ENCODE measurements at regions of chr2 and their contacts with region 1.

Region 1: GRCh38 chr2:233261819-233262555 is 10.5 kb downstream of the ATG16L1 start:
- DNase-seq: no peak
- H3K4me3 ChIP-seq: no peak overlapping the region
- CTCF ChIP-seq: no peak

Region 2: DNA sequence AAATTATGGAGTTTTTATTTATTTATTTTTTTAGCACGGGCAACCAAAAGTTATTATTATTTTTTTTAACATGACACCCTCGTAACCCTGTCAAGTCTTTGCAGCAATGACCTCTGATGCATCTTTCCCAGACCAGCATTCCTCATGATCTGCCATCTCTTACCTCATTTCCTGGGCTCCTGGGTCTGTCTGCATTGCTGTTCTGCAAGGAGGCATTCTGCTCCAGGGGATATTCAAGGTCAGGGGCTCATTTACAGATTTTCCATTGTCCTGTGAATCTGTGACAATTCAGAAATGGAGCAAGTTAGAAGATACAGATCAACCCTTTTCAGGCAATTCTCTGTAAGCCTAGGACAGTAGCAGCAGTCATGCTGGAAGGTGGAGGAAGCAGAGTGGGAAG is 291.9 kb before region 1 on chr2:
- CTCF ChIA-PET with region 1: no interaction called
- POLR2A ChIA-PET with region 1: no interaction called
- DNase-seq: no peak
- H3K4me3 ChIP-seq: no peak overlapping the region
- CTCF ChIP-seq: no peak

Region 3: DNA sequence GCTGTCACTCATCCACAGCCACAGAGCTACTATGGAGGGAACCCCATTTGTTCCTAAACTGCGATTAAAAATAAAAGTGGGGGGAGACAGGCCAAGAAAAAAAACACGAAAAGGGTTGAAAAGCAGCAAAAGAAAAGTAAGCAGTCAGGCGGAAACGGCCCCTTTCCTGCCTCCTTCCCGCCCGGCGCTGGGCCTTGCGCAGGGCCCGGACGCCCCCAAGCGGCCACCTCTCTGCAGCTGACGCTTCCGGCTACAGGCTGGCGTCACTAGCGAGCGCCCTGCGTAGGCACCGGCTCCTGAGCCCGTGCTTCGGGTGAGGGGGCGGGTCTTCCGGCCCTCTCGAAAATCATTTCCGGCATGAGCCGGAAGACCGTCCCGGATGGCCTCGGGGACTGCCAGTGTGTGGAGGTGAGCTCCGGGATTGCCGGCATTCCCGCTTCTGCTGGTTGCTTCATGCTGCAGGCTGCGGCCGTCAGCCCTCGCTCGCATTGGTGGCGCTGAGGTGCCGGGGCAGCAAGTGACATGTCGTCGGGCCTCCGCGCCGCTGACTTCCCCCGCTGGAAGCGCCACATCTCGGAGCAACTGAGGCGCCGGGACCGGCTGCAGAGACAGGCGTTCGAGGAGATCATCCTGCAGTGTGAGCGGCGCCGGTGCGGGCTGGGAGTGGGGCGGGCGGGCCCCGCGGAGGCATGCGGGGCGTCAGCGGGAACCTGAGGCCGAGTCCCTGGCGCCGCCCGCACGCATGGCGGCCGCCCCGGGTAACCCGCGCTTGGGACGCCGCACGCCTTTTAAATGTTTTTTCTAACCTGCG is 10.5 kb before region 1 on chr2 and contains the start of gene ATG16L1:
- CTCF ChIA-PET with region 1: interaction called, 17 read pairs
- POLR2A ChIA-PET with region 1: interaction called, 3 read pairs
- DNase-seq: peak; percentile 70
- H3K4me3 ChIP-seq: peak within 1 kb of the TSS; percentile 100
- CTCF ChIP-seq: peak; percentile 97

Region 4: DNA sequence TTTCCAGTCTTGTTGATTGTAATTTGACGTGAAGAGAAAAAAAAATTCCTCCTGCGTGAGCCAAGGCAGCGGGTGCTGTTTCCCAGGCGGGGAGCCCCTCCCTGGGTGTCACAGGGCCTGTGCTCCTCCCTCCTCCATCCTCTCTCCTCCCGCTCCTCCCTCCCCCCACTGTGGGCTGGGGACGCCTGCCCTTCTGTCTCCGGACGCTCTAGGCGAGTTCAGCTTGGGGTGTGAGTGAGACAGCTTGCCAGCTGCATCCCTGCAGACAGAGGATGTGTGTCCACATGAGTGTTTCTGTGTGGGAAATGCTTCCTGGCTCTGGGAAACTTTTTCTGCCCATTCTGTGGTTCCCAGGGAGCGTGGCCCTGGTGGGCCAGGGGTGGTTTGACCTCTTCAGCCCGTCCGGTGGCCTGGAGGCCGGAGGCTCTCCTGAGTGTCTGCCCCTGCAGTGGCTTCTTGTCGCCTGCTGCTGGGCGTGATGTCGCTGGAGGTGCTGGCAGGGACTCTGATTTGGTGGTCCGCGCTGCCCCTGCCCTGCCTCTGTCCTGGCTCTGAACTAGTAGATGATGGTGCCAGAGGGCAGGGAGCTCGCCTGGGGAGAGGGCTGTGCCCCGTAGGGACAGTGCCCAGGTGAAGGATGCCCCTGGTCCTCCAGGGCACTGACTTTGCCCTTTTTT is 208.2 kb after region 1 on chr2:
- CTCF ChIA-PET with region 1: no interaction called
- POLR2A ChIA-PET with region 1: no interaction called
- DNase-seq: no peak
- H3K4me3 ChIP-seq: no peak overlapping the region
- CTCF ChIP-seq: no peak

Region 5: GRCh38 chr2:233656443-233656842 is 394.5 kb after region 1 on chr2:
- CTCF ChIA-PET with region 1: no interaction called
- POLR2A ChIA-PET with region 1: no interaction called
- DNase-seq: no peak
- H3K4me3 ChIP-seq: no peak overlapping the region
- CTCF ChIP-seq: no peak